ENCODE measurements at regions of chr10 and their contacts with region 1.

Region 1: GRCh38 chr10:62582804-62583208 is 208.6 kb downstream of the ZNF365 start:
- DNase-seq: no peak
- ATAC-seq: no peak
- H3K4me3 ChIP-seq: no peak overlapping the region
- H3K27ac ChIP-seq: no peak overlapping the region
- H3K4me1 ChIP-seq: no peaks in the 10 kb centered on the region
- CTCF ChIP-seq: no peak
- EP300 ChIP-seq: no peak
- POLR2A ChIP-seq: no peak
- RAD21 ChIP-seq: no peak

Region 2: DNA sequence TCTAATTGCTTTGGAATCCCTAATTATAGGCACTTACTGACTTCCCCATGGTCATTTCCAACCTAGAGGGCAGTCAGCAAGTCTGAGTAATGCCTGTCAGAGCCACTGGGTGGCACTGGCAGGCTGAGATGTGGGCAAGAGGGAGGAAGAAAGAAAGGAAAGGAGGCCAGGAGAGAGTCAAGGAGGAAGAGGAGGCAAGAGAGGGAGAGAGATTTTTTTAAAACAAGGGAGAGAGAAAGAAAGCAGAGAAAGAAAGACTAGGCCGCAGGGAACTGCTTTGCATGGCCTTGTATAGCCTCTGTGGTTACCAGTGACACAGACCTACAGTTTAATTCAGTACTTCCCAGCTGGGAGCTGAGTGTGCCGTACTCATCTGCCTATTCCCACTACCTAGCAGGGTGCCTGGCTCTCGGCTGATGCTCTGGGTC is 11.3 kb after region 1 on chr10:
- CTCF ChIA-PET with region 1: interaction called, 23 read pairs
- POLR2A ChIA-PET with region 1: no interaction called
- DNase-seq: peak; percentile 26 to 58
- ATAC-seq: peak; percentile 94 to 98
- H3K4me3 ChIP-seq: no peak overlapping the region
- H3K27ac ChIP-seq: no peak overlapping the region
- H3K4me1 ChIP-seq: no peaks in the 10 kb centered on the region
- CTCF ChIP-seq: peak; percentile 84
- EP300 ChIP-seq: no peak
- POLR2A ChIP-seq: no peak
- RAD21 ChIP-seq: peak; percentile 88 to 96